GM23248 (cell line): ENCODE measurements at regions of chr13 and their contacts with region 1.

Region 1: DNA sequence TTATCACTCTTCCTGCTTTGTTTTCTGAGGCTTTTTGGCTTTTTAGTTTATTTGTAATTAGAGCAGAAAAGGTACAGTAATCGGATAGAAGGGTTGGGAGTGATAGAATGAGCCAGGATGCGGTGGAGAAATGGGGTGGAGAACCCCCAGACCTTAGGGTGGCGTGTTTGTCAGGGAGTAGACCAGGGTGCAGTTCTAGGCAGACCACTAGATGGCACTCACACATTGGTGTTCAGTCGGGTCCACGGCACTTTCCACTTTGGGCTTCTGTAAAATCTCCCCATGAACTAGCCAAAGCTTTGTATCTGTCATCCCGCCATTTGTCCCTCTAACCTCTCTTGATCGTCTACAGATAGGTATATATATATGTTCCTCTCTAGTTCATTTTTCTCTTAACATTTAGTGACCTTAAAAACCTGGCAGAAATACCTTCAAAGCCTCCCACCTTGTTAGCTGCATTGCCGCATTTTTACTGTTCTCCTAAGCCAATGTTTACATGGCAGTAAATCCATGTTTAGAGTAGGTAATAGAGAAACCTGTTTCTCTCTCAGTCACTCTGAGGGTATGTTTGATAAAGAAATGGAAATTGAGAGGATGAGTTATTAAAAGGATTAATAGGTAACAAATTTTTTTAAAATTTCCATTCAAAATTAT is 154.9 kb downstream of the TM9SF2 start:
- DNase-seq: peak; percentile 79
- H3K4me3 ChIP-seq: peak overlapping the region; percentile 55
- H3K27ac ChIP-seq: peak overlapping the region; percentile 67
- H3K4me1 ChIP-seq: peaks cover 7% of the 10 kb centered on the region
- H3K27me3 ChIP-seq: no peaks in the 10 kb centered on the region

Region 2: GRCh38 chr13:100514788-100515409 is 858.7 kb after region 1 on chr13:
- in situ Hi-C with region 1: loop called (anchors 10 kb)
- DNase-seq: peak; percentile 86
- H3K4me3 ChIP-seq: no peak overlapping the region
- H3K27ac ChIP-seq: no peak overlapping the region
- H3K4me1 ChIP-seq: no peaks in the 10 kb centered on the region
- H3K27me3 ChIP-seq: no peaks in the 10 kb centered on the region